Naive thymus-derived CD4-positive, alpha-beta T cell (primary cell): ENCODE measurements at regions of chr20 and their contacts with region 1.

Region 1: GRCh38 chr20:32743237-32744112 is at the start of gene COMMD7:
- DNase-seq: peak; percentile 48 to 72 (median 63)
- ATAC-seq: peak; percentile 83
- H3K4me3 ChIP-seq: peak within 1 kb of the TSS; percentile 96
- H3K4me3 Mint-ChIP-seq: peak within 1 kb of the TSS; percentile 93 to 100 (median 96)
- H3K27ac ChIP-seq: peak within 1 kb of the TSS; percentile 86
- H3K27ac Mint-ChIP-seq: peak within 1 kb of the TSS; percentile 93 to 98 (median 97)
- H3K4me1 ChIP-seq: peaks cover 18% of the 10 kb centered on the region in 2 donors
- H3K4me1 Mint-ChIP-seq: peaks cover 6 to 52% (median 35%) of the 10 kb centered on the region in 7 donors
- H3K27me3 ChIP-seq: no peaks in the 10 kb centered on the region
- H3K27me3 Mint-ChIP-seq: no peaks in the 10 kb centered on the region
- total RNA-seq, gene COMMD7: 31.5 to 66.3 (median 40.3) TPM

Region 2: GRCh38 chr20:32681175-32682084 is 62.0 kb before region 1 on chr20:
- CTCF ChIA-PET with region 1: interaction called, 6 read pairs
- POLR2A ChIA-PET with region 1: interaction called, 4 read pairs
- intact Hi-C with region 1: loop called in 1 of 2 experiments (anchors 5 kb)
- DNase-seq: no peak
- ATAC-seq: peak; percentile 45
- H3K4me3 ChIP-seq: no peak overlapping the region
- H3K4me3 Mint-ChIP-seq: no peak overlapping the region
- H3K27ac ChIP-seq: no peak overlapping the region
- H3K27ac Mint-ChIP-seq: peak overlapping the region in 3 of 9 donors; percentile 36 to 72 (median 37)
- H3K4me1 ChIP-seq: no peaks in the 10 kb centered on the region
- H3K4me1 Mint-ChIP-seq: peaks cover 3 to 14% (median 8%) of the 10 kb centered on the region in 7 donors
- H3K27me3 ChIP-seq: no peaks in the 10 kb centered on the region
- H3K27me3 Mint-ChIP-seq: no peaks in the 10 kb centered on the region

Region 3: DNA sequence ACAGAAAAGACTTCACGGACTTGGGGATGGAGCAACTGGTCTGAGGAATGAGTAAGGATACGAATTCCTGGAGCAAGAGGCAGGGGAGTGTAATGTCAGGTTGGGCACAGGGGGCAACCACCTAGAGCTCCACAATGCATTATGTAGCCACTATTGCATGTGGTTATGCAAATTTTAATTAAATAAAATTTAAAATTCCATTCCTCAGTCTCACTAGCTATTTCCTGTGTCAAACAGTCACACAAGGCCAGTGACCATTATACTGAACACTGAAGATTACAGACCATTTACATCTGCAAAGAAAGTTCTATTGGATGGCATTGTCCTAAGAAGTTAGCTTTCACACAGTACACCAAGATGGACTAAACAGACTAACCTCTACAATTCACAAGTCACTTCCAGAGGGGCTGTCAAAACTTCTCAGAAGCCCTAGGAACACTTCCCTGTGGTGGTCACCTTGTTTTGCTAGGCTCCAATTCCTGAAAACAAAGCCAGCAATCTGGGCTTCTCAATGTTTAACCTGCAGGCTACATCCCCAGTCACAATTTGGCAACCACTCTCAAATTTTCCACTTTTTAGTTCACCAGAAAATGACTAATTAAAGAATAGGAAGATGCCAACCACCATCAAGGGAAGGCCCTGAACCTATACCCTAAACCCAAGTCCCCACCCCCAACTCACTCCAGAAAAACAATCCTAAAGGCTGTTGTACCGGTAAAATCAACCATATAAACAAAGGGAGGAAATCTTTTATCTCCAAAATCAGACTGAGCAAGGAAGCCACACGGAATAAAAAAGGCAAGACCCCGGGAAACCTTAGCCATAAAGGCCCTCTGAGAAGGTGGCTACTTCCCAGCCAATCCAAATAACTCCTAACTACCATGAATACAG is 35.5 kb before region 1 on chr20:
- CTCF ChIA-PET with region 1: no interaction called
- POLR2A ChIA-PET with region 1: interaction called, 3 read pairs
- intact Hi-C with region 1: loop called in 1 of 2 experiments (anchors 2 kb)
- DNase-seq: no peak
- ATAC-seq: no peak
- H3K4me3 ChIP-seq: no peak overlapping the region
- H3K4me3 Mint-ChIP-seq: no peak overlapping the region
- H3K27ac ChIP-seq: no peak overlapping the region
- H3K27ac Mint-ChIP-seq: peak overlapping the region in 4 of 9 donors; percentile 39 to 76 (median 61)
- H3K4me1 ChIP-seq: no peaks in the 10 kb centered on the region
- H3K4me1 Mint-ChIP-seq: peaks cover 5 to 16% (median 9%) of the 10 kb centered on the region in 7 donors
- H3K27me3 ChIP-seq: no peaks in the 10 kb centered on the region
- H3K27me3 Mint-ChIP-seq: no peaks in the 10 kb centered on the region

Region 4: GRCh38 chr20:32762149-32762753 is 18.8 kb after region 1 on chr20 and contains the start of gene DNMT3B:
- CTCF ChIA-PET with region 1: no interaction called
- POLR2A ChIA-PET with region 1: interaction called, 16 read pairs
- intact Hi-C with region 1: loop called (anchors 1 kb)
- DNase-seq: peak; percentile 41 to 80 (median 62)
- ATAC-seq: peak; percentile 89
- H3K4me3 ChIP-seq: peak within 1 kb of the TSS; percentile 59
- H3K4me3 Mint-ChIP-seq: peak within 1 kb of the TSS; percentile 85 to 94 (median 88)
- H3K27ac ChIP-seq: peak within 1 kb of the TSS; percentile 11
- H3K27ac Mint-ChIP-seq: peak within 1 kb of the TSS; percentile 4 to 94 (median 75)
- H3K4me1 ChIP-seq: peaks cover 0 to 11% of the 10 kb centered on the region in 2 donors
- H3K4me1 Mint-ChIP-seq: peaks cover 8 to 31% (median 23%) of the 10 kb centered on the region in 7 donors
- H3K27me3 ChIP-seq: no peaks in the 10 kb centered on the region
- H3K27me3 Mint-ChIP-seq: peaks cover 0 to 25% (median 0%) of the 10 kb centered on the region in 5 donors
- total RNA-seq, gene DNMT3B: 0.32 to 2.5 (median 0.66) TPM